Panc1 (cell line): ENCODE measurements at regions of chr3 and their contacts with region 1.

Region 1: DNA sequence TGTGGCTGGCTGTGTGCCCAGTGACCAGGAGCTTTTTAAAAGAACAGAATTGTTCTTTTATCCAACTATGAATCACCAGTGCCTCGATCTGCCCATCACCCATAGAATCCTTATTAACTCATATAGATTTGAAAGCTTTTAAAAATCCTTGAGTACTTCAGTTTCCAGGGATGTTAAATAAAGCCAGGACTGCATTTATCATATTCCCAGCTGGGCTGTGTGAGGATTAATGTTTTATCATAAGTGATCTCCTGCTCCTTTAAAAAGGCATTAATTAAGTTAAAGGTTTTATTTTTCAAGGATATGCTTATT is 234.0 kb downstream of the MYRIP start:
- DNase-seq: no peak
- ATAC-seq: no peak
- H3K4me3 ChIP-seq: no peak overlapping the region
- H3K27ac ChIP-seq: no peak overlapping the region
- H3K4me1 ChIP-seq: no peaks in the 10 kb centered on the region
- H3K27me3 ChIP-seq: no peaks in the 10 kb centered on the region
- CTCF ChIP-seq: no peak

Region 2: DNA sequence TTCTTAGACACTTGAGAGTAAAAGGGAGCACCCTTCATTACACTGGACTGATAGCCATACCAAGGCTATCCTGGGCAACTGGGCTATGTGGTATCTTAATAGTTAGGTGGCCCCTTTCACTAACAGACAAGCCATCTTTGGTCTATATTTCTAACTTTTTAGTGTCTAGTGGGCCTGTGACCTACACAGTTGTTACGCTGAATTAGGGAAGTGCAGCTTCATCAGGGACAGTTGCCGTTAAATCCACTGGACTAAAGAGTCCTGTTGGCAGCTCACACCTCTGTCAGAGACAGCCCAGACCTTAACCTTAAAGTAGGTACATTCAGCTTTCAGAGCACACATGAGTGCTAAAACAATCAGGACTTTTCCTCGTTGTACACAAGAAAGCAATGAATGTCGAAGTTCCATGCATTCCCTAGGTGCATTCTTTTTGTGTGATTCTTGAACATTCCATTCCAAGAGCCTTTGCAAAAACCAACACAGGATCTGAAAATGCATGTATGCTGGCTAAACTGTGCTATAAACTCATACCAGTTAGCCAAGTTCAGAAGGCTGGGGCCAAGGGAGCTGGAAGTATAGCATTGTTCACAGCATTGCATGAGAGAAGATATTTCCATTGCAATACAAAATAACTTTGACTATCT is 35.9 kb after region 1 on chr3:
- CTCF ChIA-PET with region 1: interaction called, 12 read pairs
- POLR2A ChIA-PET with region 1: no interaction called
- in situ Hi-C with region 1: no loop called
- intact Hi-C with region 1: no loop called
- DNase-seq: no peak
- ATAC-seq: no peak
- H3K4me3 ChIP-seq: no peak overlapping the region
- H3K27ac ChIP-seq: no peak overlapping the region
- H3K4me1 ChIP-seq: no peaks in the 10 kb centered on the region
- H3K27me3 ChIP-seq: no peaks in the 10 kb centered on the region
- CTCF ChIP-seq: no peak